ENCODE measurements at regions of chr4 and their contacts with region 1.

Region 1: DNA sequence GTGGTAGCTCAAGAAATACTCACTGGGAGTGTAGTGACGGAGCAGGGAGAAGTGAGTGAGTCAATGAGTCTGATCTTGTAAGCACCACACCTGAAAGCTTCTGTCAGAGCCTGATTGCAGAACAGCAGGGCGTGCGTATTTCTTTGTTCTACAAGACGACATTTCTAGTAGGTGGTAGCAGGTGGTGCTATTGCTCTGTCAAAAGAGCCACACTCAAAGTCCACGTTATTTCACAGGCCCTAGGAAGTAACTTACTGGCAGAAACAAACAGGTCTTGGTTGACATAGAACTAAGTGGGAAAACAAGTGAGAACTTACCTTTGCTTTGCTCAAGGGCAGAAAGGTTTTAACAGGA is 46.4 kb upstream of the SPRY1 start:
- DNase-seq: peak; percentile 70 to 85 (median 79)
- H3K4me3 ChIP-seq: no peak overlapping the region
- H3K27ac ChIP-seq: no peak overlapping the region
- H3K4me1 ChIP-seq: peaks cover 0 to 17% (median 7%) of the 10 kb centered on the region in 4 experiments
- H3K27me3 ChIP-seq: no peaks in the 10 kb centered on the region

Region 2: DNA sequence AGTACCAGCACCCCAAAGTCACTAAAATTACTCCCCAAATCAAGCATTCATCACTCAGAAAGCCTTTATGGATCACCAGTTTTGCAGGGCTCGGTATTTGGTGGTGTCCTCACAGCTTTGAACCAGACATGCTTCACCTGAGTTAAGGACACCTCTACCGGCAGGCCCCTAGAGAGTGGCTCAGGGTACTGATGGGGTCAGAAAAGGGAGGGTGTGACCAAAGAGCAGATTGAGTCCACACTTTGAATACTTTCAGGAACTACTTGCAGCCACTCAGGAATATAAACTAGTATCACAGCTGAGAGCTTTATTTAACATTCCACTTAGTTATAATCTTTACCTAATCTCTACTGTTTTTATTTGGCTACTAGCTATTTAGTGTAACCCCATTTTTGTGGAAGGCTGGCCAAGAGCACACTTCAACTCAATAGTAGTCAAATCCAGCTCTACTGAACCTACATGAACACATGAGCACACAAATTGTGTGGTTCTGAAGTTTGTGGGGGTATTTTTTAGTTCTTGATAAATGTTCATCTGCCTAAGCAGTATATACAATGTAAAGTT is 63.2 kb before region 1 on chr4:
- CTCF ChIA-PET with region 1: no interaction called
- POLR2A ChIA-PET with region 1: interaction called, 10 read pairs
- DNase-seq: no peak
- H3K4me3 ChIP-seq: no peak overlapping the region
- H3K27ac ChIP-seq: no peak overlapping the region
- H3K4me1 ChIP-seq: peaks cover 0 to 16% (median 11%) of the 10 kb centered on the region in 4 experiments
- H3K27me3 ChIP-seq: no peaks in the 10 kb centered on the region

Region 3: DNA sequence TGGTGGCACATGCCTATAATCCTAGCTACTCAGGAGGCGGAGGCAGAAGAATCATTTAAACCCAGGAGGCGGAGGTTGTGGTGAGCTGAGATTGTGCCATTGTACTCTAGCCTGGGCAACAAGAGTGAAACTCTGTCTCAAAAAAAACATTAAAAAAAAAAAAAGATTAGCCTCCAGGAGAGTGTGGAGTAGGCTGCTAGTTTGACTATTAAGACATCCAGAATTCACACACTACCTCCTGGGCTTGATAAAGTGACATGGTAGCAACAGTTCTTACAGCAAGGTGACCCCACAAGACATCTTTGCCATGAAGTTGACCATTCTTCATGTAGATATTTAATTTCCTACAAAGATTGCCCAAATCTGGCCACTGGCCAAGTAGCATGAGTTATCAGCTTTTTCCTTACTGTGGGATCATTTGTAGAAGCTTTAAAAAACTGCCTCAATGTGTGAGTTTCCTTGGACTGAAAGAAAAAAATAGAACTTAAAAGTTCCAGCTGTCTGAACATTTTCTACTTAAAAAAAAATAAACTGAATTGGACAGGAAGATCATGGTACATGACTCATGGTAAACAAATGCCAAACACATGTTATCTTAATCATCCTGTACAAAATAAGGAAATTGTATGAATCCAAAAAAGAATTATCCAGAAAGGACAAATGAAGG is 11.2 kb after region 1 on chr4:
- CTCF ChIA-PET with region 1: interaction called, 20 read pairs
- POLR2A ChIA-PET with region 1: no interaction called
- DNase-seq: peak; percentile 52 to 78 (median 77)
- H3K4me3 ChIP-seq: no peak overlapping the region
- H3K27ac ChIP-seq: peak overlapping the region in 1 of 2 experiments; percentile 16
- H3K4me1 ChIP-seq: peaks cover 3 to 24% (median 10%) of the 10 kb centered on the region in 4 experiments
- H3K27me3 ChIP-seq: no peaks in the 10 kb centered on the region